Sigmoid colon (tissue), 7 donors: ENCODE measurements at regions of chr6 and their contacts with region 1.

Region 1: GRCh38 chr6:125779924-125780539 is 10.7 kb upstream of the NCOA7 start:
- DNase-seq: peak; percentile 90
- H3K4me3 ChIP-seq: peak overlapping the region; percentile 38 to 65 (median 56)
- H3K27ac ChIP-seq: peak overlapping the region; percentile 82 to 94 (median 88)
- H3K4me1 ChIP-seq: peaks cover 0 to 11% (median 5%) of the 10 kb centered on the region in 4 donors
- H3K27me3 ChIP-seq: no peaks in the 10 kb centered on the region
- CTCF ChIP-seq: peak; percentile 37 to 51 (median 42)
- EP300 ChIP-seq: no peak
- POLR2A ChIP-seq: no peak

Region 2: GRCh38 chr6:125749173-125749864 is 30.7 kb before region 1 on chr6 and contains the start of gene HEY2:
- intact Hi-C with region 1: loop called (anchors 2 kb)
- DNase-seq: peak; percentile 96
- H3K4me3 ChIP-seq: peak within 1 kb of the TSS; percentile 53 to 74 (median 70)
- H3K27ac ChIP-seq: peak within 1 kb of the TSS; percentile 86 to 89 (median 88)
- H3K4me1 ChIP-seq: peaks cover 0 to 33% (median 21%) of the 10 kb centered on the region in 4 donors
- H3K27me3 ChIP-seq: peaks cover 0 to 44% (median 0%) of the 10 kb centered on the region in 3 donors
- CTCF ChIP-seq: peak in 1 of 4 experiments; percentile 28
- EP300 ChIP-seq: peak in 1 of 4 donors; percentile 40
- POLR2A ChIP-seq: peak in 1 of 2 donors; percentile 17
- total RNA-seq, gene HEY2: 1.3 to 3.9 (median 2.1) TPM

Region 3: GRCh38 chr6:125759184-125759902 is 20.7 kb before region 1 on chr6:
- intact Hi-C with region 1: no loop called
- DNase-seq: no peak
- H3K4me3 ChIP-seq: no peak overlapping the region
- H3K27ac ChIP-seq: no peak overlapping the region
- H3K4me1 ChIP-seq: no peaks in the 10 kb centered on the region
- H3K27me3 ChIP-seq: no peaks in the 10 kb centered on the region
- CTCF ChIP-seq: no peak
- EP300 ChIP-seq: no peak
- POLR2A ChIP-seq: no peak

Region 4: GRCh38 chr6:125858427-125859320 is 78.6 kb after region 1 on chr6:
- intact Hi-C with region 1: no loop called
- DNase-seq: peak; percentile 67
- H3K4me3 ChIP-seq: no peak overlapping the region
- H3K27ac ChIP-seq: no peak overlapping the region
- H3K4me1 ChIP-seq: peaks cover 0 to 3% (median 0%) of the 10 kb centered on the region in 4 donors
- H3K27me3 ChIP-seq: no peaks in the 10 kb centered on the region
- CTCF ChIP-seq: peak in 3 of 4 experiments; percentile 32 to 49 (median 39)
- EP300 ChIP-seq: no peak
- POLR2A ChIP-seq: no peak

Region 5: GRCh38 chr6:125986300-125987025 is 206.4 kb after region 1 on chr6 and contains the start of gene TRMT11:
- intact Hi-C with region 1: loop called (anchors 10 kb)
- DNase-seq: peak; percentile 93
- H3K4me3 ChIP-seq: peak within 1 kb of the TSS; percentile 64 to 76 (median 69)
- H3K27ac ChIP-seq: peak within 1 kb of the TSS; percentile 81
- H3K4me1 ChIP-seq: peaks cover 0 to 27% (median 23%) of the 10 kb centered on the region in 4 donors
- H3K27me3 ChIP-seq: no peaks in the 10 kb centered on the region
- CTCF ChIP-seq: no peak
- EP300 ChIP-seq: no peak
- POLR2A ChIP-seq: peak; percentile 63 to 64
- total RNA-seq, gene TRMT11: 20.3 to 27.8 (median 25.7) TPM

Region 6: GRCh38 chr6:126077810-126078776 is 298.1 kb after region 1 on chr6:
- intact Hi-C with region 1: no loop called
- DNase-seq: peak; percentile 90
- H3K4me3 ChIP-seq: no peak overlapping the region
- H3K27ac ChIP-seq: peak overlapping the region in 1 of 4 donors; percentile 61
- H3K4me1 ChIP-seq: peaks cover 0 to 3% (median 0%) of the 10 kb centered on the region in 4 donors
- H3K27me3 ChIP-seq: no peaks in the 10 kb centered on the region
- CTCF ChIP-seq: no peak
- EP300 ChIP-seq: no peak
- POLR2A ChIP-seq: no peak